ENCODE measurements at regions of chr20 and their contacts with region 1.

Region 1: DNA sequence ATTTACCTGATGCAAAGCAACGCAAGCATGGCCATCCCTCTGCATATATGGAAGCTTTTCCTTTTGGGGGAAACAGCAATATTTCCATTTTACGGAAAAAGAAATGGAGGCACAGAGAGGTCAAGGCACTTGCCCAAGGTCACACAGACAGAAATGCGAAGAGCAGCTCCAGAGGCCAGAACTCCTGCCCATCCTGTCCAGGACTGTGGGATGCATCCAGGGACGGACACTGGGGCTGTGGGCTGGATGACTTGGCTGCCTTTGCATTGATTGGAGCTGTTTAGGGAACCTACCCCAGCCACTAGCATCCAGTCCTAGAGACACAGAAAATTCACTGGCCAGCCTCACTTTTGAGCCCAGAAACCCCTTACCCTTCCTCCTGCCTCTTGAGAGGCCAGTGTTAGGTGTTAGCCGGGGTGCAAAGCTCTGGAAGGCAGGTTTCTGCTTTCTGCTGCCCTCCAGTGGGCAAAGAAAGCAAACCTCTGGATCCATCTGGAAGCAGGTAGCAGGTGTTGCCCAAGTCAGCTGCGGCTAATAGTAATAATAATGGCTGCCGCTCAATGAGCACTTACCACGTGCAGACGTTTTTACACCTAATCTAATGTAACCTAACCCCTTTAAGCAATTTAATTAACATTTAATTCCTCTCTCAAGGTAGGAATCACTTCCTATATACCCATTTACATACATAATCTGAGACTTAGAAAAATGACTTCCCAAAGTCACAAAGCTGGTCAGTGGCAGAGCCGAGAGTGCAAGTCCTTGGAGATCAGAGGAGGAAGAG is 31.7 kb upstream of the CCN5 start:
- DNase-seq: peak in 6 of 9 donors; percentile 21 to 68 (median 44)
- ATAC-seq: peak; percentile 77
- H3K4me3 ChIP-seq: no peak overlapping the region
- H3K4me3 Mint-ChIP-seq: no peak overlapping the region
- H3K27ac ChIP-seq: no peak overlapping the region
- H3K27ac Mint-ChIP-seq: peak overlapping the region in 1 of 9 donors; percentile 61
- H3K4me1 ChIP-seq: no peaks in the 10 kb centered on the region
- H3K4me1 Mint-ChIP-seq: peaks cover 5 to 15% (median 9%) of the 10 kb centered on the region in 7 donors
- H3K27me3 ChIP-seq: no peaks in the 10 kb centered on the region
- H3K27me3 Mint-ChIP-seq: peaks cover 0 to 6% (median 0%) of the 10 kb centered on the region in 5 donors

Region 2: GRCh38 chr20:44388466-44389023 is 294.9 kb before region 1 on chr20:
- CTCF ChIA-PET with region 1: interaction called, 4 read pairs
- POLR2A ChIA-PET with region 1: no interaction called
- intact Hi-C with region 1: loop called (anchors 2 to 10 kb)
- DNase-seq: peak; percentile 30 to 70 (median 50)
- ATAC-seq: peak; percentile 91
- H3K4me3 ChIP-seq: no peak overlapping the region
- H3K4me3 Mint-ChIP-seq: peak overlapping the region in 4 of 10 donors; percentile 14 to 69 (median 38)
- H3K27ac ChIP-seq: no peak overlapping the region
- H3K27ac Mint-ChIP-seq: peak overlapping the region in 1 of 9 donors; percentile 41
- H3K4me1 ChIP-seq: no peaks in the 10 kb centered on the region
- H3K4me1 Mint-ChIP-seq: peaks cover 4 to 16% (median 8%) of the 10 kb centered on the region in 7 donors
- H3K27me3 ChIP-seq: no peaks in the 10 kb centered on the region
- H3K27me3 Mint-ChIP-seq: peaks cover 9 to 20% (median 10%) of the 10 kb centered on the region in 5 donors

Region 3: GRCh38 chr20:44651684-44652423 is 31.6 kb before region 1 on chr20 and contains the start of gene ADA:
- CTCF ChIA-PET with region 1: interaction called, 17 read pairs
- POLR2A ChIA-PET with region 1: interaction called, 13 read pairs
- intact Hi-C with region 1: loop called in 1 of 2 experiments (anchors 1 kb)
- DNase-seq: peak; percentile 26 to 70 (median 48)
- ATAC-seq: peak; percentile 70
- H3K4me3 ChIP-seq: peak within 1 kb of the TSS; percentile 73
- H3K4me3 Mint-ChIP-seq: peak within 1 kb of the TSS; percentile 81 to 96 (median 94)
- H3K27ac ChIP-seq: peak within 1 kb of the TSS; percentile 73
- H3K27ac Mint-ChIP-seq: peak within 1 kb of the TSS; percentile 88 to 98 (median 95)
- H3K4me1 ChIP-seq: peaks cover 38 to 43% of the 10 kb centered on the region in 2 donors
- H3K4me1 Mint-ChIP-seq: peaks cover 40 to 57% (median 55%) of the 10 kb centered on the region in 7 donors
- H3K27me3 ChIP-seq: no peaks in the 10 kb centered on the region
- H3K27me3 Mint-ChIP-seq: no peaks in the 10 kb centered on the region
- total RNA-seq, gene ADA: 26.1 to 103 (median 28.2) TPM

Region 4: DNA sequence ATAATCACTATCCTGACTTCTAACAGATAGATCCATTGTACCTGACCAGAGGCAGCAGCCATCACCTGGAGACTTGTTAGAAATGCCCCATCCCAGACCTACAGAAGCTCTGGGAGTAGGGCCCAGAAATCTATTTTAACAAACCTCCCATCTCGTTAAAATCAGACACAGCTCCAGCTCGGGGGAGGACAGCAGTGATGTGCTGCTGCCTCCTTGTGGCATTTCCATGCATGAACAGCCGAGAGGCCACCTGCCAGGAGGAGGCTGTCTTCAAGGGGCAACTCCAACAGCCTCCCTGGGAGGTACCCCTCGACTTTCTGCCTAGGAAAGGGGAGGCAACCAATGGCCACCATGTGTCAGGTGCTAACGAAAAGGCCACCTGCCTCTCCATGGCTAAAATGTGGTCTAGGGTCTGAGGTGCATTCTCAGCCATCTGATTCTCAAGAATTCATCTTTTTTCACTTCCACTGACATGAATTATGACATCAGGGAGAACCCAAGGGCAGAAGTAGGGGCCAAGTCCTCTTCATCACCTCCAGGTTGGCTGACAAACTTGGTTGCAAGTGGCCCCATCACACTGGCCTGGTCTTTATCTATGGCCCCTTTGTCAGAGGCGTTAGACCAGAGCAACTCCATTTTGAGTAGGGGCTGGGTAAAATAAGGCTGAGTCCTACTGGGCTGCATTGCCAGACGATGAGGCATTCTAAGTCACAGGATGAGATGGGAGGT is 50.0 kb after region 1 on chr20:
- CTCF ChIA-PET with region 1: interaction called, 8 read pairs
- POLR2A ChIA-PET with region 1: no interaction called
- intact Hi-C with region 1: loop called (anchors 1 kb)
- DNase-seq: peak; percentile 34 to 73 (median 57)
- ATAC-seq: peak; percentile 77
- H3K4me3 ChIP-seq: no peak overlapping the region
- H3K4me3 Mint-ChIP-seq: no peak overlapping the region
- H3K27ac ChIP-seq: no peak overlapping the region
- H3K27ac Mint-ChIP-seq: peak overlapping the region in 1 of 9 donors; percentile 32
- H3K4me1 ChIP-seq: no peaks in the 10 kb centered on the region
- H3K4me1 Mint-ChIP-seq: peaks cover 11 to 23% (median 20%) of the 10 kb centered on the region in 7 donors
- H3K27me3 ChIP-seq: no peaks in the 10 kb centered on the region
- H3K27me3 Mint-ChIP-seq: no peaks in the 10 kb centered on the region

Region 5: GRCh38 chr20:44805979-44806620 is 122.6 kb after region 1 on chr20:
- CTCF ChIA-PET with region 1: no interaction called
- POLR2A ChIA-PET with region 1: no interaction called
- intact Hi-C with region 1: no loop called
- DNase-seq: no peak
- ATAC-seq: no peak
- H3K4me3 ChIP-seq: no peak overlapping the region
- H3K4me3 Mint-ChIP-seq: no peak overlapping the region
- H3K27ac ChIP-seq: no peak overlapping the region
- H3K27ac Mint-ChIP-seq: no peak overlapping the region
- H3K4me1 ChIP-seq: no peaks in the 10 kb centered on the region
- H3K4me1 Mint-ChIP-seq: peaks cover 4 to 13% (median 8%) of the 10 kb centered on the region in 7 donors
- H3K27me3 ChIP-seq: no peaks in the 10 kb centered on the region
- H3K27me3 Mint-ChIP-seq: peaks cover 45 to 63% (median 55%) of the 10 kb centered on the region in 5 donors

Region 6: GRCh38 chr20:44866703-44867335 is 183.4 kb after region 1 on chr20:
- CTCF ChIA-PET with region 1: interaction called, 9 read pairs
- POLR2A ChIA-PET with region 1: no interaction called
- intact Hi-C with region 1: loop called (anchors 1 kb)
- DNase-seq: no peak
- ATAC-seq: no peak
- H3K4me3 ChIP-seq: no peak overlapping the region
- H3K4me3 Mint-ChIP-seq: peak overlapping the region in 9 of 10 donors; percentile 41 to 81 (median 70)
- H3K27ac ChIP-seq: no peak overlapping the region
- H3K27ac Mint-ChIP-seq: peak overlapping the region in 2 of 9 donors; percentile 33 to 43
- H3K4me1 ChIP-seq: no peaks in the 10 kb centered on the region
- H3K4me1 Mint-ChIP-seq: peaks cover 0 to 15% (median 8%) of the 10 kb centered on the region in 7 donors
- H3K27me3 ChIP-seq: no peaks in the 10 kb centered on the region
- H3K27me3 Mint-ChIP-seq: peaks cover 0 to 28% (median 0%) of the 10 kb centered on the region in 5 donors

Region 7: GRCh38 chr20:45111799-45112471 is 428.5 kb after region 1 on chr20:
- CTCF ChIA-PET with region 1: no interaction called
- POLR2A ChIA-PET with region 1: no interaction called
- intact Hi-C with region 1: loop called in 1 of 2 experiments (anchors 5 kb)
- DNase-seq: no peak
- ATAC-seq: no peak
- H3K4me3 ChIP-seq: no peak overlapping the region
- H3K4me3 Mint-ChIP-seq: no peak overlapping the region
- H3K27ac ChIP-seq: no peak overlapping the region
- H3K27ac Mint-ChIP-seq: no peak overlapping the region
- H3K4me1 ChIP-seq: no peaks in the 10 kb centered on the region
- H3K4me1 Mint-ChIP-seq: peaks cover 0 to 6% (median 4%) of the 10 kb centered on the region in 7 donors
- H3K27me3 ChIP-seq: no peaks in the 10 kb centered on the region
- H3K27me3 Mint-ChIP-seq: peaks cover 0 to 11% (median 2%) of the 10 kb centered on the region in 5 donors